K562 (cell line): ENCODE measurements at regions of chr13 and their contacts with region 1.

Region 1: DNA sequence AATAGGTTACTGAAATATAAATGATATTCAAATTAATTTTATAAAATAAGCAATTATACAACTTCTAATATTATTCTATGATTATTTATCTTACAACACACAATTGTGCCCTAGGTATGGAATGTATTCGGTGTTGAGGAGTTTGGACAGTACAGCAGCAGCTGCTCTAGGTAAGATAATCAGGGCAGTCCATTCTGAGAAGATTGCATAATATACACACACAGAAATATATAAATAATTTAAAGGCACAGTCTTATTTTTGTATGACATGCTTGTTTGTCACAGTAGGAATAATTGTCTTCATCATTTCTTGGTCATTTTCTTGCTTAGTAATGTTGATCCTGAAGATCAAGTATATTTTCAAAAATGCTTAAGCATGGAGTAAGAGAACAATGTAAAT is 849.4 kb upstream of the MIR17HG start:
- DNase-seq: no peak
- ATAC-seq: no peak
- H3K4me3 ChIP-seq: no peak overlapping the region
- H3K27ac ChIP-seq: no peak overlapping the region
- H3K4me1 ChIP-seq: no peaks in the 10 kb centered on the region
- H3K27me3 ChIP-seq: no peaks in the 10 kb centered on the region
- CTCF ChIP-seq: no peak
- EP300 ChIP-seq: no peak
- POLR2A ChIP-seq: no peak
- RAD21 ChIP-seq: no peak

Region 2: DNA sequence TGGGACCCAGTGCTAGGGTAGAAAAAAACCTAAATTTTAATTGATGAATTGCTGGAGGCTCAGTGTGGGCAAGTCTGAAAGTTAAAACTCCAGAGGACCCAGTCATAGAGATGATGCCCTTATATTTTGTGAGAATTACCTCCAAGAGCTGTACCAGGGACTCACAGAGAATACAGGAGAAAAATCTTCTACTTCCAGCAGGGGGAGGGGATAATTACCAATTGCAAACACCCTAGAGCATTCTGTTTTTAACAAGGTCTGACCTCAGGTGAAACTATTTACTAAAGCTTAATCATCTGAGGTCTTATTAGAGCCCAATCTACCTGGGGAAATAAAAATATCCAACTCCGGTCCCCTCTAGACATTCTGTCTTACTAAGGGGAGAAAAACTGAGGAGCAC is 145.3 kb before region 1 on chr13:
- CTCF ChIA-PET with region 1: no interaction called
- POLR2A ChIA-PET with region 1: no interaction called
- in situ Hi-C with region 1: no loop called
- intact Hi-C with region 1: loop called (anchors 5 kb)
- DNase-seq: no peak
- ATAC-seq: no peak
- H3K4me3 ChIP-seq: no peak overlapping the region
- H3K27ac ChIP-seq: no peak overlapping the region
- H3K4me1 ChIP-seq: no peaks in the 10 kb centered on the region
- H3K27me3 ChIP-seq: no peaks in the 10 kb centered on the region
- CTCF ChIP-seq: no peak
- EP300 ChIP-seq: no peak
- POLR2A ChIP-seq: no peak
- RAD21 ChIP-seq: no peak

Region 3: DNA sequence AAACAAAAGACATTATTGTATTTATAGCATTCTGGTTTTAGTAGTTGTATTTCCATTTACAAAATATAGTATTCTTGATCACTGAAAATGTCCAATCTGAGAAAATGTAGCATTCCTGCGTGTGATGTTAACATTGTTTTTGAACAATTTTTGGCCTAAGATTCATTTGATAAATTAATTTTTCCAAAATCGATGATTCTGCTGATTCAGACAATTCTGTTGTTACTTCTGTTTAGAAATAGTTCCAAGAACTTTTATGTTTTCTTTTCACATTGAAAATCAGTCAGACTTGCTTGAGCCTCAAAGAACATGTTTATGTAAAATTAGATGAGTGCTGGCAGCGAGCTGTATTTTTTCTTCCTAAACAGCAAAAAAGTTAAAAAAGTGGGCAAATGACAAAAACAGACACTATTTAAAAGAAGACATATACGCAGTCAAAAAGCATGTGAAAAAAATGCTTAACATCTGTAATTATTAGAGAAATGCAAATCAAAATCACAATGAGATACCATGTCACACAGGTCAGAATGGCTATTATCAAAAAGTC is 44.9 kb after region 1 on chr13:
- CTCF ChIA-PET with region 1: no interaction called
- POLR2A ChIA-PET with region 1: no interaction called
- in situ Hi-C with region 1: no loop called
- intact Hi-C with region 1: loop called (anchors 5 kb)
- DNase-seq: no peak
- ATAC-seq: no peak
- H3K4me3 ChIP-seq: no peak overlapping the region
- H3K27ac ChIP-seq: no peak overlapping the region
- H3K4me1 ChIP-seq: no peaks in the 10 kb centered on the region
- H3K27me3 ChIP-seq: no peaks in the 10 kb centered on the region
- CTCF ChIP-seq: no peak
- EP300 ChIP-seq: no peak
- POLR2A ChIP-seq: no peak
- RAD21 ChIP-seq: no peak